HepG2 (cell line): ENCODE measurements at regions of chr10 and their contacts with region 1.

Region 1: GRCh38 chr10:34979938-34980337 is 110.2 kb downstream of the CUL2 start:
- DNase-seq: no peak
- ATAC-seq: no peak
- H3K4me3 ChIP-seq: no peak overlapping the region
- H3K27ac ChIP-seq: no peak overlapping the region
- H3K4me1 ChIP-seq: no peaks in the 10 kb centered on the region
- H3K27me3 ChIP-seq: peaks cover 0 to 10% of the 10 kb centered on the region in 2 experiments; a peak in 1 of 5 replicates
- CTCF ChIP-seq: no peak
- EP300 ChIP-seq: no peak
- POLR2A ChIP-seq: no peak
- RAD21 ChIP-seq: no peak

Region 2: GRCh38 chr10:34689053-34689452 is 290.9 kb before region 1 on chr10:
- CTCF ChIA-PET with region 1: no interaction called
- POLR2A ChIA-PET with region 1: no interaction called
- in situ Hi-C with region 1: loop called (anchors 10 kb)
- intact Hi-C with region 1: no loop called
- DNase-seq: no peak
- ATAC-seq: no peak
- H3K4me3 ChIP-seq: no peak overlapping the region
- H3K27ac ChIP-seq: no peak overlapping the region
- H3K4me1 ChIP-seq: no peaks in the 10 kb centered on the region
- H3K27me3 ChIP-seq: no peaks in the 10 kb centered on the region
- CTCF ChIP-seq: no peak
- EP300 ChIP-seq: no peak
- POLR2A ChIP-seq: no peak
- RAD21 ChIP-seq: no peak

Region 3: DNA sequence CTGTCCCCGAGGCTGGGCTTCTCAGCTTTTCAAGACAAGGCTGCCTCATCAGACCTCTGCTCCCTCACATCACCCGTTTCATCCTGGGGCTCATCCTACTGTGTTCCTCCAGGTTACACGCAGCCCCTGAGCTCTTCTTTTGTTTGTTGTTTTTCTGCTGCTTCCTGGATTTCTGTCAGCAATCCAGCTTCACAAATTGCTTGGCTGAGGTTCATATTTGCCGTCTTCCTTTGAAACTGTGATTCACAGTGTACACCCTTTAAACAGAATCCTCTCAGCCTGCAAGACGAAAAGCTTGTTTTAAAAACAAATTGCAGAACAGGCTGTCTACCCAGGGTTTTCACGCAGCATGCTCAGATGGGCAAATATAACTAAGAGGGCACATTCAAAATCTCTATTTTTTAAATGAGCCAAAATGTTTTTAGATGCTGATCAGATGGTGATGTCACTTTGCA is 125.8 kb before region 1 on chr10:
- CTCF ChIA-PET with region 1: no interaction called
- POLR2A ChIA-PET with region 1: no interaction called
- in situ Hi-C with region 1: no loop called
- intact Hi-C with region 1: no loop called
- DNase-seq: no peak
- ATAC-seq: no peak; the same call in 2 of the 3 replicates
- H3K4me3 ChIP-seq: no peak overlapping the region
- H3K27ac ChIP-seq: no peak overlapping the region
- H3K4me1 ChIP-seq: peaks cover 18% of the 10 kb centered on the region
- H3K27me3 ChIP-seq: no peaks in the 10 kb centered on the region
- CTCF ChIP-seq: no peak
- EP300 ChIP-seq: no peak
- POLR2A ChIP-seq: no peak
- RAD21 ChIP-seq: no peak

Region 4: DNA sequence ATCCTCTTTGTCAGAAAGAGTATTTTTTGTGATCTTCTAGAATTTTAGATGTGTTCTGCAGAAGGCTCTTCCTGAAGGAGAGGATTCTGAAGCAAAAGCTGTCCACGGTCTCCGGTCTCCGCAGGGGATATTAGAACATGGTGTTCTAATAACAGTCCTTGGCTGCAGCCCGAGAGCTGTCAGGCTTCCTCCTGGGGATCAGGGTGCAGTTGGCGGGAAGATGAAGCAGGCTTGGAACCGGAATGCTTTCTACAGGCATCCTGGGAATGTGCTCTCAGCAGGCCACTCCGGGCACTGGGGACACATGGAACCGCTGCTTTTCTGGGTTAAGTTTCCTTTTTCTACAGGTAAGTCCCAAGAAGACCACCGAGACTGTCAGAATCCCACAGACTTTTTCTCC is 46.3 kb before region 1 on chr10:
- CTCF ChIA-PET with region 1: no interaction called
- POLR2A ChIA-PET with region 1: no interaction called
- in situ Hi-C with region 1: no loop called
- intact Hi-C with region 1: no loop called
- DNase-seq: no peak
- ATAC-seq: peak; percentile 86
- H3K4me3 ChIP-seq: no peak overlapping the region
- H3K27ac ChIP-seq: no peak overlapping the region
- H3K4me1 ChIP-seq: 0 out of 2 replicates have a peak, but pooled peaks cover 7% of the 10 kb centered on the region
- H3K27me3 ChIP-seq: peaks cover 0 to 2% of the 10 kb centered on the region in 2 experiments; a peak in 2 of 5 replicates
- CTCF ChIP-seq: no peak
- EP300 ChIP-seq: no peak
- POLR2A ChIP-seq: no peak
- RAD21 ChIP-seq: no peak

Region 5: DNA sequence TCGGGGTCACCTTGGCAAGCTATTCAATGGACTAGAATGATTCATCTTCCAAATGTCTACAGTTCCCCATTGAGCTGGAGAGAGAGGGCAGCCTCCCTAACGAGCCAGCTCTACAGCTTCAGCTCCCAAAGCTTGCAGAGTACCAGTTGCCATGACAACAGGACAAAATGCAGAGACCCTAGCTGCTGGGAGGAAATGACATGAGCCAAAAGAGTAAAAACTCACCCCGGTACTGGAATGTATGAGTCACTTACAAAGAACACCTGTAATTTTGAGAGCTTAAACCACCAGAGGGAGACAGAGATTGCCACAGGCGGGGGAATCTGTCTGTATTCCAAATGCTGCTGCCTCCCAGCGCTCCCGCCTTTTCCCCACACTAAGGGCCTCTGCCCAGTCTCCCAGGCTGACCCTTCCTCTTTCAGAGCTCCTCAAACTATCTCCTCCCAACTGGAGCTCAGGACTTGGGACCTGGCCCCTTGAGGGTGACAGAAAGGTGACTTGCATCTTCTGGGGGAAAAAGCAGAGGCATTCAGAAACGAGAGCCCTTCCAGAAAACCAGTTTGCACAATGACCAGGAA is 14.7 kb after region 1 on chr10:
- CTCF ChIA-PET with region 1: no interaction called
- POLR2A ChIA-PET with region 1: no interaction called
- in situ Hi-C with region 1: no loop called
- intact Hi-C with region 1: no loop called
- DNase-seq: peak; percentile 79
- ATAC-seq: peak; percentile 90
- H3K4me3 ChIP-seq: peak overlapping the region in 1 of 3 experiments; percentile 37; a peak in 2 of 6 replicates
- H3K27ac ChIP-seq: no peak overlapping the region
- H3K4me1 ChIP-seq: peaks cover 12% of the 10 kb centered on the region
- H3K27me3 ChIP-seq: no peaks in the 10 kb centered on the region
- CTCF ChIP-seq: peak; percentile 83
- EP300 ChIP-seq: no peak
- POLR2A ChIP-seq: no peak
- RAD21 ChIP-seq: peak; percentile 71

Region 6: DNA sequence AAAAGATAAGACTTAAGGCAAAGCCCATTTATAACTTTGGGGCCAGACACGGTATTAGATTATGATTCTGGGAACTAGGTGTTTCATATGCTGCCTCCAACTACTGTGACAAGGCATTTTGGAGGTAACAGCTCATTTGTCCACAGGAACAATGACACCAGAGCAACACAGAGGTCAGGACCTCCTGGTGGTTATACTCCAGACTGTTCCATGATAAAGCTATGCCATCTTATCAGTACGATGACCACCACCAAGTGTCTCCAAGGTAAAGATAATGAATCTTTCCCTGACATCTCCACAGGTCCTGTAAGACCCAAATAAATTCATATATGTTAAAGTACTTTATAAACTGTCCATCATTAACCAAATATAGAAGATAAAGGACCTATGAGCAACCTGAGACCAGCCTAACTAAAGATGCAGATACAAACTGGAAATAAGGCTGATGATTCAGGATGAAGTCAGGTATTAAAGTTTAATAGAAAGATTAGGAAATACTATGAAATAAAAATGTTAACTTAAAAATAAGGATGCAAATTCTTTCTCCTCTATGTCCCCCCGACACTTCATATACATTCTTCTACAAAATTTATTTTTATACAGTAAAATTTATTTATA is 84.0 kb after region 1 on chr10:
- CTCF ChIA-PET with region 1: no interaction called
- POLR2A ChIA-PET with region 1: no interaction called
- in situ Hi-C with region 1: no loop called
- intact Hi-C with region 1: no loop called
- DNase-seq: no peak
- ATAC-seq: no peak
- H3K4me3 ChIP-seq: no peak overlapping the region
- H3K27ac ChIP-seq: no peak overlapping the region
- H3K4me1 ChIP-seq: no peaks in the 10 kb centered on the region
- H3K27me3 ChIP-seq: no peaks in the 10 kb centered on the region
- CTCF ChIP-seq: no peak
- EP300 ChIP-seq: no peak
- POLR2A ChIP-seq: no peak
- RAD21 ChIP-seq: no peak